WTC11 (cell line): ENCODE measurements at regions of chr2 and their contacts with region 1.

Region 1: DNA sequence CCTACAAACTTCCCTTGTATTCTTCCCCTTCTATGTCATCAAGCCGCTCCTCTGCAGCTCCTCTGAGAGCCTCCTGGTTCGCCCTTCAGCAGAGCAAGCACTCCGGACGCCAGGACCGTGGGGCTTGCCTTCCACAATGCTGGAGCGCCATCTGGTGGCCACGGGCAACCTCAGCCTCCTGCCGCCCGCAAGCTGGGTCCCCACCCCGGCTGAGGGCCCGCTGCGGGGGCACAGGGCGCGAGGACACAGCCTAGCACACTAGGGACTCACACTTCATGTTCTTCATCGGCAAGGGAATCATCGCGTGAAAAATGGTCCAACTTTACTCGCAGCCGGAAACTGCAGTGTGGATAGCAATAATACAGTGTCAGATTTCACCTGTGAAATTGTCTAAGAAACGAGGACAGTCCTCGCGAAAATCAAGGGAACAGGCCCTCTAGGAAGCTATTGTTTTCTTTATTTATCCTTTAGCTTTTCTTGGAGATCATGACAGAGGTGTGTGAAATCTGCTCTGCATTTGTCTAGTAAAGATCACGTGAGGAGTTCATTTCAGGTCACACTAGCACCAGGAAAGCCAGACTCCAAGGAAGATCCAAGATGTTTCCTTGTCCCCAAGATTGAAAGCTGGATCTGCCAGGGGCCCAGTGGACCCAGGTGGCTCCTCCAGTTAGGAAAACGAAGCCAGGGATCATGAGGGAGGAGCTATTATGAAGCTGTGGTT is 5.8 kb downstream of the PRLH start:
- DNase-seq: peak; percentile 97
- ATAC-seq: peak; percentile 91
- H3K4me3 Mint-ChIP-seq: no peak overlapping the region
- H3K27ac Mint-ChIP-seq: peak overlapping the region; percentile 24; the same call in 1 of the 2 replicates
- H3K4me1 Mint-ChIP-seq: peaks cover 41% of the 10 kb centered on the region
- H3K27me3 Mint-ChIP-seq: no peaks in the 10 kb centered on the region
- CTCF ChIP-seq: peak; percentile 96

Region 2: GRCh38 chr2:236715491-236715961 is 856.7 kb before region 1 on chr2:
- CTCF ChIA-PET with region 1: no interaction called
- POLR2A ChIA-PET with region 1: no interaction called
- DNase-seq: no peak
- ATAC-seq: no peak
- H3K4me3 Mint-ChIP-seq: no peak overlapping the region
- H3K27ac Mint-ChIP-seq: no peak overlapping the region
- H3K4me1 Mint-ChIP-seq: no peaks in the 10 kb centered on the region
- H3K27me3 Mint-ChIP-seq: no peaks in the 10 kb centered on the region
- CTCF ChIP-seq: no peak

Region 3: DNA sequence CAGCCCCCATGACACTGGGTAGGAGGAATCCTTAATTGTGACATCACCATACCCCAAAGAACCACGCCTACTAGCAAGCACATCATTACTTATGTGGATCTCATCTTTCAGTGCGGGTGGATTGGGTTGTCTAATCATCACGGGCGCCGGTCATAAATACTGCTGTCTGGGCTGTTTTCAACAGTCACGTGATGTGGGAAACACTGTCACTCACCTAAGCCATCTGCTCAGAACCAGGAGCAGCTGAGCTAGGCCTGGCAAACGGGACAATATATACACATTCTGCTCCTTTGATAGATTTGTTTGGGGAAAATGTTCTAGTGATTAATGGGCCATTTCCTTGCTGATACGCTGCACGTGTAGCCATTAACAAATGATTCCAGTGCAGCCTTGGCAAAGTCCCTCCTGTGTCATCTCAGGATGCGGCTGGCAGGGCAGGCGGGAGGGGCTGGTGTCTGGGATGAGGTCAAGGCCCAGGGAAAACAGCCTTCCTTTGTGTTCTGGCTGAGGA is 632.4 kb before region 1 on chr2:
- CTCF ChIA-PET with region 1: no interaction called
- POLR2A ChIA-PET with region 1: no interaction called
- DNase-seq: no peak
- ATAC-seq: no peak
- H3K4me3 Mint-ChIP-seq: no peak overlapping the region
- H3K27ac Mint-ChIP-seq: no peak overlapping the region
- H3K4me1 Mint-ChIP-seq: peaks cover 4% of the 10 kb centered on the region; the same call in 1 of the 2 replicates
- H3K27me3 Mint-ChIP-seq: peaks cover 4% of the 10 kb centered on the region; the same call in 1 of the 2 replicates
- CTCF ChIP-seq: no peak

Region 4: DNA sequence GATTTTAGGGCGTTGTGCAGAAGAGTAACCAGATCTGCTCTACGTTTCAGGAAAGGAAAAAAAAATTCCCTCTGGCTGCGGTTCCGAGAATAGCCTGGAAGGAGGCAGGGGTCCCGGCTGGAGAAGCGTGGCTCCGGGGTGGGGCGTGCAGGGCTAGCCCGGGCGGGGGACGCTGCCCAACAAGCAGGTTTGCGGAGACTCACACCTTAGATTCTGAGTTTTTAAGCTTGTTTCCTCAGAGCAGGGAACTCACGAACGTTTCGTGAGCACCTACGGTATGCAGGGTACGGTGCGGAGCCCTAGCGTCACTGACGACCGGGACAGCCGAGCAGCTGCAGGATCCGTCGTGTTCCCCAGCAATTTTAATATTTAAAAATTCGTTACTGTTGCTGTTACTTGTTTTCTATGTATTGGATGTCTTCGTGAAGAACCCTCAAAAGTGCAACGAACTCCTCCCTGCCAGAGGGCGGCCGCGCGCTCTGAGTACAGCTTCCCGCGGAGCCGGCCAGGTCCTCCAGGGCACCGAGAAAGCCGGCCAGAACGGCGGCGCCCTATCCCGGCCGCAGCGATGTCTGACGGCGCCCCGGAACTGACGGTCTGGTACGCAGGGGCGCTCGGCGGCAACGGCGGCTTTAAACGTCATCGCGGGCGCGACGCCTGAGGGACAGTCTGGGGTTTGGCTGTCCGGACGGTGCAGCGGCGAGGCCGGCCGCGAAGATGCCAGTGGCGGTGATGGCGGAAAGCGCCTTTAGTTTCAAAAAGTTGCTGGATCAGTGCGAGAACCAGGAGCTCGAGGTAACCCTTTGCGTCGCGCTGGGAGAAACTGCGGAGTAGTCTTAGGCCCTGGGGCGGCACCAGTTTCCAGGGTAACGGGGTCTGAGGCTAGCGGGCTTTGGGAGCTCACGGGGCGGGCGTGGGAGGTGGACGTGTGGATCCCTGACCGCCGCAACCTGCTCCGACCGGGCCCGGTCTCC is 486.6 kb before region 1 on chr2 and contains the start of gene COPS8:
- CTCF ChIA-PET with region 1: interaction called, 10 read pairs
- POLR2A ChIA-PET with region 1: no interaction called
- DNase-seq: peak; percentile 95
- ATAC-seq: peak; percentile 99
- H3K4me3 Mint-ChIP-seq: peak within 1 kb of the TSS; percentile 98
- H3K27ac Mint-ChIP-seq: peak within 1 kb of the TSS; percentile 99
- H3K4me1 Mint-ChIP-seq: peaks cover 8% of the 10 kb centered on the region
- H3K27me3 Mint-ChIP-seq: peaks cover 4% of the 10 kb centered on the region; the same call in 1 of the 2 replicates
- CTCF ChIP-seq: no peak
- total RNA-seq, gene COPS8: 51.0 to 65.9 TPM (median 60.1 TPM) in 3 replicates

Region 5: DNA sequence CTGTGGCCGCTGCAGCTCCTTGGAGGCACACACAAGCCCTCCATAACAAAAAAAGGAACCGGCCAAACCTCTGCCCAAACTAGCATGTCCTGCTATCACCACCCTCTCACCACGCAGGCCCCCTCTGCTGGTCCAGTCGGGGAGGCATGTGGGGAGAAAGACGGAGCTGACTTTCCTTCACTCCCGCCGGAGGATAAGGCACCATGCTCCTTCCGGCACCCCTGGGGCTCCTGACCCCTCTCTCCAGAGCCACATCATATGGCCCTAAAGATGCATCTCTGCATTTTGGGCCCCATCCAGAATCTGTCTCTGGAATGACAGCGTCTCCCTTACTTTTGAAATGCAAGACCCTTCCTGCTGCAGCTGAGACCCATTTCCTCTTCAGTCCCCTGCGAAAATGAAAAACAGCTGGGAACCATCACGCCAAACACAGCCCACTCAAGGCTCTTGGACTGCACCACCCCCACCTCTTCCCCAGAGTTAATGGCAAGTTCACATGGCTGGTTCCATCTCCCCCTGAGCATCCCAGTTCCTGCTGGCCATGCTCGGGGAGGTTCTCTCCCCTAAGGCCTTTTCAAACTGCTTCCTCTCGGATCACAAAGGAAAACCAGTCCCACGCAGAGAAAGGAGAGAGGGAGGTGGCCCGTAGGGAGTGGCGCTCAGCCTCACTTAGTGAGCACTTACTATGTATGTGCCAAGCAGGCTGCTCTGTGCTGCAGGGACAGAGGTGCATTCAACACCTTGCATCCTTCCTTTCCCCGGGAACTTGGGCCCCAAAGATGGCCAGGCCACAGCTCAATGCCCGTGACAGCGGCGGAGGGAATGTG is 120.3 kb before region 1 on chr2:
- CTCF ChIA-PET with region 1: interaction called, 21 read pairs
- POLR2A ChIA-PET with region 1: no interaction called
- DNase-seq: peak; percentile 64
- ATAC-seq: peak; percentile 89
- H3K4me3 Mint-ChIP-seq: no peak overlapping the region
- H3K27ac Mint-ChIP-seq: no peak overlapping the region
- H3K4me1 Mint-ChIP-seq: peaks cover 21% of the 10 kb centered on the region
- H3K27me3 Mint-ChIP-seq: peaks cover 24% of the 10 kb centered on the region
- CTCF ChIP-seq: no peak

Region 6: DNA sequence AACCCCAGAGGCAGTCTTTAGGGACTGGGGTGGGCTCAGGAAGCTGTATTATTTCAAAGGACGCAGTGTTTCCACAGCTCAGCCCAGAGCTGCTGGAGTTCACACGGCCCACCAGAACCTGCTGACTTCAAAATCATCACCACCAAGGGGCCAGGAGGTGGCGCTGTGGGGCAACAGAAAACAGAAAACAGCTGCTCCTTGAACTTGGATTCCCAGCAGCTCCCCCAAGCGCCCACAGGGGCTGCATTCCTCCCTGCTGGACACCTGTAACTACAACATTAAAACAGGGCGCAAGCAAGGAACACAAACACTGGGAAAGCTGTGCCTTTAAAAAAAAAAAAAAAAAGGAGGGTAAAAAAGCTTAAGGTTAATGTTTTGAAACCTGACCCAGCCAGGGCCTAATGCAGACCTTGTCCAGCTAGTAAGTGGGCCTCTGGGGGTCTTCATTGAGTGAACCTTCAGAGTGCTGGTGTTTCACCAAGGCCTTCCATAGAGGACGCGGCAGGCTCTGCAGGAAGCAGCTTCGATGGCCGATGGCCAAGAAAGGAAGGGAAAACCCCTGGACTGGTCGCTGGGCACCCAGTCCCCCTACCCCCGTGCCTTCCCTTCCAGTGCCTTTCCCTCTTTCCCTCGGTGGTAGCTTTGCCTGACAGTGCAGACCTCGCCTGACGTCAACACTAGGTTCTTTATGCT is 59.3 kb before region 1 on chr2:
- CTCF ChIA-PET with region 1: interaction called, 385 read pairs
- POLR2A ChIA-PET with region 1: interaction called, 11 read pairs
- DNase-seq: peak; percentile 92
- ATAC-seq: peak; percentile 87
- H3K4me3 Mint-ChIP-seq: no peak overlapping the region
- H3K27ac Mint-ChIP-seq: no peak overlapping the region
- H3K4me1 Mint-ChIP-seq: peaks cover 12% of the 10 kb centered on the region
- H3K27me3 Mint-ChIP-seq: no peaks in the 10 kb centered on the region; the same call in 1 of the 2 replicates
- CTCF ChIP-seq: peak; percentile 94

Region 7: DNA sequence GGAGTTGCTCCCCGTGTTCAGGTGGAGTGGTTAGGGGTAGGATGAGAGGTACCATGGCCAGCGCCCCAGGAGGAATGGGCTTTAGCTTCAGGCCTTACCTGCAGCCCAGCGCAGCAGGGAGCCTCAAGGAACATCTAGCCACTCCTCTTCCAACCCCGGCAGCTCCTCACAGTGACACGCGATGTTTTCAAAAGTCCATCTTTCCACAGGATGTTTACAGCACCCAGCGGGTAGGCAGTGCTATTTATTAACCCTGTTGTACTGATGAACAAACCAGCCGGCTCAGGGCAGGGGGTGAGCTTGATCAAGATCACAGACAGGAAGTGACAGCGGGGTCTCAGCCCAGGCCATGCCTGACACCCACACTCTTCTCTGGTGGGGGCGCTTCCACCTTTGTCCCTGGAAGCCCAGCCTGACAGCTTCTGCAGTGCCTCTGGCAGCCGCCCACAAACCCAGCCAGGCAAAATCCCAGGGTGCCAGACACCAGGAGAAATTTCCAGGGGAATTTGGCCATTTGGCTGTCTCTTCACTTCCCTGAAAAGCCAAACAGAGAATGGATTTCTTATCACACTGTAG is 24.3 kb before region 1 on chr2:
- CTCF ChIA-PET with region 1: interaction called, 54 read pairs
- POLR2A ChIA-PET with region 1: no interaction called
- DNase-seq: peak; percentile 62
- ATAC-seq: peak; percentile 85
- H3K4me3 Mint-ChIP-seq: no peak overlapping the region
- H3K27ac Mint-ChIP-seq: no peak overlapping the region
- H3K4me1 Mint-ChIP-seq: peaks cover 13% of the 10 kb centered on the region
- H3K27me3 Mint-ChIP-seq: no peaks in the 10 kb centered on the region
- CTCF ChIP-seq: no peak

Region 8: GRCh38 chr2:237603718-237604362 is 31.7 kb after region 1 on chr2:
- CTCF ChIA-PET with region 1: interaction called, 34 read pairs
- POLR2A ChIA-PET with region 1: interaction called, 3 read pairs
- DNase-seq: no peak
- ATAC-seq: peak; percentile 28
- H3K4me3 Mint-ChIP-seq: no peak overlapping the region
- H3K27ac Mint-ChIP-seq: peak overlapping the region; percentile 64
- H3K4me1 Mint-ChIP-seq: peaks cover 50% of the 10 kb centered on the region
- H3K27me3 Mint-ChIP-seq: peaks cover 12% of the 10 kb centered on the region
- CTCF ChIP-seq: no peak

Region 9: DNA sequence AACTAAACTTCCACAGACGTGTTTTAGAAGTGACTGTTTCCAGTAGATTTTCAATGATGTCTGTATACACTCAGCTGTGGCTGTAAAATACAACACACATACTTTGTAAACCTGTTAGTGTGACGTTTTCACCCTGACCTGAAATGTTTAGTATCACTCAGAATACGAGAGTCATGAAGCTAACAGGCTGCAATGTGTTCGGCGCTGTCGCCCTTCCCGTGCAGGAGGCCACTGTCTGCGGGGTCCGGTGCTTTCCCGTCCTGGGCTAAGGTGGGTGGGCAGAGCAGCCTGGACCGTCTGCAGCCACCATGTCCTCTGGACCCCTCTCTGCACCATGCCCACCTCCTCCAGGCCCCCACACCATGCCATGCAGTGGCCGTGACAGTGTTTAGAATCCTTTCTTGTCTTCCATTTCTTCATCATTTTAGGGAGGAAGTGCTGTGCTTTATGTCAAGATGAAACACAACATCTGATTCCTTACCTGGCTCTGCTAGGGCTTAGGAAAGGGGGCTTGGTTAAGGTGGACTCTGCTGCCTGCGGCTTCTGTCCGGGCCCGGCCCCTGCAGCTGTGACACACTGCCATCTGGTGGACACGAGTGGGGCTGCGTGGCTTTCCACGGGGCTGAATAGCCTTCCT is 172.6 kb after region 1 on chr2:
- CTCF ChIA-PET with region 1: interaction called, 17 read pairs
- POLR2A ChIA-PET with region 1: no interaction called
- DNase-seq: peak; percentile 86
- ATAC-seq: peak; percentile 82
- H3K4me3 Mint-ChIP-seq: no peak overlapping the region
- H3K27ac Mint-ChIP-seq: peak overlapping the region; percentile 80
- H3K4me1 Mint-ChIP-seq: peaks cover 43% of the 10 kb centered on the region
- H3K27me3 Mint-ChIP-seq: no peaks in the 10 kb centered on the region
- CTCF ChIP-seq: peak; percentile 80